ENCODE measurements at regions of chr7 and their contacts with region 1.

Region 1: DNA sequence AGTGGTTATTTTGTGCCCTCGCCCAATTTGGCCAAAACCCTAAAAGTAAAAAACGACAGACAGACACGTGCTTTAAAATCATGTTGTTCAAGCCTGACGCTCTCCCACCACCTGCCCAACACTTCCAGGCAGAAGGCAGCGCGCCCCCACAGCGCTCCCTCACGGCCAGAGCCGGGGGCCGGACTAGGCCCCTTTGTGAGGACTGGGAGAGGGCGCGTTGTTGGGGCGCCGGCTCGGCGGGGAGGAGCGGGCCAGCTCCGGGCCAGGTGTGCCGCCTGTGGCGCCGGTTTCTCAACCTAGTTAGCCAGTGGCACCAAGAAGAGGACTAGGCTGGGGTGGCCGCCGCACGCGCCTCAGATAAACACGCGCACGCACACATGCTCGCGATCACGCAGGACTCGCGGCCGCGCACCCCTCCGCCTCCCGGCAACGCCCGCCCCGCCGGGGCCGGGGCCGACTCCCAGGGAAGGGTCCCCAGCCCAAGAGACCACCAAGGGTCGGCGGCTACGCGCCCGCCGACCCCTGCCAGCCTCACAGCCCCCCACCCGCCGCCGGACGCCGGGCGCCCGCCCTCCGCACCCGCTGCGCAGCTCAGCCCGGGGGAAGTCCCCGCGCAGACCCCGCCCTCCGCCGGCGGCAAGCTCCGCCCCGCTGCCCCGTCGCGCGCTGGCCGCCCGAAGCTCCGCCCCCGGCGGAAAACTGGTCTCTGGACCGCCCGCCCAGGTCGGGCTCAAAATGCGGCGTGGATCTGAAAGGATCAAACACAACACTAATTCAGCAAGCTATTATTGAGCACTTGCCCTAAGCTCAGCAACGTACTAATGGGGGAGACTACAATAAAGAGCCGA is at the start of gene IMMP2L:
- DNase-seq: peak; percentile 89
- H3K4me3 Mint-ChIP-seq: peak within 1 kb of the TSS; percentile 87
- H3K27ac Mint-ChIP-seq: peak within 1 kb of the TSS; percentile 85
- H3K4me1 Mint-ChIP-seq: peaks cover 31% of the 10 kb centered on the region
- H3K27me3 Mint-ChIP-seq: peaks cover 9% of the 10 kb centered on the region
- total RNA-seq, gene IMMP2L: 12.4 and 20.0 TPM in 2 replicates

Region 2: GRCh38 chr7:111113263-111114017 is 448.7 kb before region 1 on chr7:
- intact Hi-C with region 1: loop called (anchors 5 kb)
- DNase-seq: no peak
- H3K4me3 Mint-ChIP-seq: no peak overlapping the region
- H3K27ac Mint-ChIP-seq: peak overlapping the region; percentile 88
- H3K4me1 Mint-ChIP-seq: peaks cover 40% of the 10 kb centered on the region
- H3K27me3 Mint-ChIP-seq: no peaks in the 10 kb centered on the region

Region 3: DNA sequence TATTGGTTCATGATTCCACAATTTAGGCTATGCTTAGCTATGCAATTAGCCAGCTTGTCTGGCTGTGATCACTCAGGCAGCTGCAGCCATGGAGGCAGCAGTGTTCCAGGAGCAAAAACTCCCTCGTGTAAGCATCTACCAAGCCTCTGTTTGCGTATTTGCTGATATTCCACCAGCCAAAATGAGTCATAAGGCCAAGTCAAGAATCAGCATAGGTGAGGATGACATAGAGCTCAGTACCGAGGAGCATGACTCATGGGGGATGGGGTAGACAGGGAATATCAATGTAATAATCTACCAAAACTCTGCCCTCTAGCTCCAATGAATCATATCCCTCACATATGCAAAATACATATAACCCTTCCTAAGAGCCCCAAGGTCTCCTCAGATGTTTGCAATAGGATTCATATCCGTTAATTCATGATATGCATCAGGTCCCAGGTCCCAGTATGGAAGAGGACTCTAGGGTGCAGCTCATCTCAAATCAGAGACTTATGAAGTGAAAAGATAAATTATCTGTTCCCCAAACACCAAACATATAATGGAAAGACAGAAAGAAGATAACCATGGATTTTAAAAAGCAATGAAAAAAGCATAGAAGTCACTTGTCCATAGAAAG is 63.0 kb before region 1 on chr7:
- intact Hi-C with region 1: loop called (anchors 5 kb)
- DNase-seq: no peak
- H3K4me3 Mint-ChIP-seq: no peak overlapping the region
- H3K27ac Mint-ChIP-seq: no peak overlapping the region
- H3K4me1 Mint-ChIP-seq: peaks cover 8% of the 10 kb centered on the region
- H3K27me3 Mint-ChIP-seq: no peaks in the 10 kb centered on the region

Region 4: DNA sequence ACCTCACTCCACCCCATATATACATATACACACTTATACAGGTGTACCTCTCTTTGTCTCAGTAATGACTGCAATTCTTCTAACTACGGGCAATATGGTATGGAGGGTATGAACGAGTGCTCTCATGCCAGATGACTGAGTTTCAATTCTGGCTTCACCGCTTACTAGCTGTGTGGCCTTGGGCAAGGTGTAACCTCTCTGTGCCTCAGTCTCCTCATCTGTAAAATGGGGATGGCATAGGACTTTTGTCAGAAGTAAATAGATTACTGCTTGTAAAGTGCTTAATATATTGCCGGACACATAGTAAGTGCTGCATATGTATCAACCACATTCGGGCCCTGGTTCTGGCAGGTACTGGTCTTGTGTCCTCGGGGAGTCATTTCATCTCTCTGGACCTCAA is 828.1 kb after region 1 on chr7:
- intact Hi-C with region 1: loop called (anchors 5 kb)
- DNase-seq: no peak
- H3K4me3 Mint-ChIP-seq: no peak overlapping the region
- H3K27ac Mint-ChIP-seq: no peak overlapping the region
- H3K4me1 Mint-ChIP-seq: peaks cover 11% of the 10 kb centered on the region
- H3K27me3 Mint-ChIP-seq: peaks cover 25% of the 10 kb centered on the region